OCI-LY7 (cell line): ENCODE measurements at regions of chr20 and their contacts with region 1.

Region 1: DNA sequence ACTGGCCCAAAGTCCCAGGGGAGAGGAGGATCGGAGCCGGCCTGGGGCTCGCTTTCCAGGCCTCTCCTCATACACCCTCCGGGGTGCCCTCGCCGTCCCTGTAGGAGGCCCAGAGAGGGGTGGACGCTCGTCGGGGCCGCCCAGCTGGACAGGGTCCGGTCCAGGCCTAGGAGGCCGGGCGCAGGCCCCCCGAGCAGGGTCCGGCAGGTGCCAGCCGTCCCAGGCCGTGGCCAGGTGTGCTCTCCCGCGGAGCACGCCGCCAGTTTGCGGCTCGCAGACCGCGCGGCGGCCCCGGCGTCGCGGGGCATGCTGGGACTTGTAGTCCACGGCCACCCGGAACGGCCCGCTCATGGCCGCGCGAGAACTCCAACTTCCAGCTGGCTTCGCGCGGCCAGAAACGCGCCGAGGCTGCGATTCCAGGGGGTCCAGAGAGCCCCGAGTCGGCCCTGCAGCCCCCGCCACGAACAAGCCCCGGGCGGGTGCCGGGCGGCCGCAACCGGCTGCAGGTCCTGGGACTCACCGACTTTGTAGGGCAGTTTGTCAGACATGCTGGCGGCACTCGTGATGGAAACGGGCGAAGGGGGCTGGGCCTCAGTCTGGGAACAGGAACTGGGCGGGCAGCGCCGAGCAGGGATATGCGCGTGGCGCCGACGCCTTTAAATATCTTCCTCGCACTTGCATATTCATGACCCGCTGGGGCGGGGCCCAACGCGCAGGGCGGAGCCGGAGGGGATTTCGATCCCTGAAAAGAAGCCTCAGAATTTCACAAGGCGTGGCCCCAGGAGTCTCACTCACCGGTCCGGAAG is at the start of gene AHCY:
- DNase-seq: peak; percentile 96
- H3K4me3 ChIP-seq: peak within 1 kb of the TSS; percentile 81
- H3K27ac ChIP-seq: peak within 1 kb of the TSS; percentile 58
- H3K4me1 ChIP-seq: peaks cover 41% of the 10 kb centered on the region
- CTCF ChIP-seq: no peak; the same call in 1 of the 2 replicates
- total RNA-seq, gene AHCY: 121 and 133 TPM in 2 replicates

Region 2: DNA sequence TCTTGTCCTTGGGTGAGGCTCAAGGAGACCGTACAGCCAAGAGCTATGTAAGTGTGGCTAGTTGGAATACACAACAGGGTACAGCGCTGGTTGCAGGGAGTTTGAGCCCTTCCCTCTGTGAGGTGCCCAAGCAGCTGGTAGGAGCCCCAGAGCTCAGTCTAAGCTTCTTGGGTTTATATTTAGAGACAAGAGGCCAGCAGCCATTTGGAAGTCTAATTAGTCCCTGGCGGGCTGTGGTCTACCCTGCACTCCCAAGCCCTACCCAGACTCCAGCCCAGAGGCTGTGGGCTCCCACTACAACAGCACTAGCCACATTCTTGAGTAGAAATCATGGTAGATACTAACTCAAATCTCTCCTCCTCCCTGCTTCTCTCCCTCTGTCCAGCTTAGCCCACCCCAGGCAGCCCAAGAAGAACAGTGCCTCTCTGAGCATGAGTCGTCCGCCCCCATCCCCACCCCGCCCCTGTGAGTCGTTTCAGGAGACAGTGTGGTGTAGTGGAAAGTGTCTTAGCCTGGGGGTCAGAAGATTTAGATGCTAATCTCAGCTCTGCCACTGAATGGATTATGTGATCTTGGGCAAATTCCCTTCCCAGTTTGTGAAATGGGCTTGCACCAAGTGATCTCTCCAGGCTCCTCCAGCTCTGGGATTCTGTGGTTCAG is 228.7 kb before region 1 on chr20:
- CTCF ChIA-PET with region 1: no interaction called
- POLR2A ChIA-PET with region 1: no interaction called
- intact Hi-C with region 1: no loop called
- DNase-seq: no peak
- H3K4me3 ChIP-seq: no peak overlapping the region
- H3K27ac ChIP-seq: no peak overlapping the region
- H3K4me1 ChIP-seq: peaks cover 11% of the 10 kb centered on the region
- CTCF ChIP-seq: no peak

Region 3: DNA sequence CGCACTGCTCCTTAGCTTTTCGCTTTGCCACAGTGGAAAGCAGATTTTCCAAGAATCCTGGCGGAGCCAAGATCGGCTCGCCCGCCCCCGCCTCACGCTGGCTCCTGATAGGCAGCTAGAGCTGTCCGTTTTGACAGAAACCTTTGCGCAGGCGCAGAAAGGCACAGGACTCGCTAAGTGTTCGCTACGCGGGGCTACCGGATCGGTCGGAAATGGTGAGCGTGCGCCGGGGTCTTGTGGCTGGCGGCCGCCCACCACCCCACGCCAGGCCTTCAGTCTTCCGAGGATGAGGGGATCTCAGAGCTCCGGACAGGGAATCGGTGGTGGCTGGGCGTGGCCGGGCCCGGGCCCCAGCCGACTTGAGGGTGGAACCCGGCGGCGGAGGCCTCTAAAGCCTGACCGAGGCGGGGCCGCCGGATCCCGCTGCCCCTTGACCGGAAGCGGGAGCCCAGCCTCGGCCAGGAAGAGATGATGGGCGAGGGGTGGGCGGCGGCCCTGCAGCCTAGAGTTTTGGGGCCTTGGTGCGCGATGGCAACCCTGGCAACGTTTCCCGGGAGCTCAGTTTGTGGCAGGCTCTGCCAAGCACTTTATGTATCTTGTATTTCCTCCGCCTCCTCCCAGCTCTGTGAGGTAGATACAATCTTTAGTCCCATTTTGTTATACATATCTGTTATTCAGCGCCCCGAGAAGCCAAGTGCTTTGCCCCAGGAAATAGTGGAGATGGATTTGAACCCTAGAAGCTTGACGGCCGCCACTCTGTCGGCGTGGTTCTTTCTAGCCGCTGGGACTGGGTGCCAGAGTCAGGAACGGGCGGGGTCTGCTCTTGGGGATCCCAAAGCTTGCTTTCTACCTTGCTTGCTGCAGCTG is 213.6 kb after region 1 on chr20 and contains the start of gene DYNLRB1:
- CTCF ChIA-PET with region 1: no interaction called
- POLR2A ChIA-PET with region 1: no interaction called
- intact Hi-C with region 1: loop called (anchors 2 kb)
- DNase-seq: peak; percentile 99
- H3K4me3 ChIP-seq: peak within 1 kb of the TSS; percentile 99
- H3K27ac ChIP-seq: peak within 1 kb of the TSS; percentile 29
- H3K4me1 ChIP-seq: peaks cover 19% of the 10 kb centered on the region
- CTCF ChIP-seq: no peak
- total RNA-seq, gene DYNLRB1: 128 and 155 TPM in 2 replicates

Region 4: DNA sequence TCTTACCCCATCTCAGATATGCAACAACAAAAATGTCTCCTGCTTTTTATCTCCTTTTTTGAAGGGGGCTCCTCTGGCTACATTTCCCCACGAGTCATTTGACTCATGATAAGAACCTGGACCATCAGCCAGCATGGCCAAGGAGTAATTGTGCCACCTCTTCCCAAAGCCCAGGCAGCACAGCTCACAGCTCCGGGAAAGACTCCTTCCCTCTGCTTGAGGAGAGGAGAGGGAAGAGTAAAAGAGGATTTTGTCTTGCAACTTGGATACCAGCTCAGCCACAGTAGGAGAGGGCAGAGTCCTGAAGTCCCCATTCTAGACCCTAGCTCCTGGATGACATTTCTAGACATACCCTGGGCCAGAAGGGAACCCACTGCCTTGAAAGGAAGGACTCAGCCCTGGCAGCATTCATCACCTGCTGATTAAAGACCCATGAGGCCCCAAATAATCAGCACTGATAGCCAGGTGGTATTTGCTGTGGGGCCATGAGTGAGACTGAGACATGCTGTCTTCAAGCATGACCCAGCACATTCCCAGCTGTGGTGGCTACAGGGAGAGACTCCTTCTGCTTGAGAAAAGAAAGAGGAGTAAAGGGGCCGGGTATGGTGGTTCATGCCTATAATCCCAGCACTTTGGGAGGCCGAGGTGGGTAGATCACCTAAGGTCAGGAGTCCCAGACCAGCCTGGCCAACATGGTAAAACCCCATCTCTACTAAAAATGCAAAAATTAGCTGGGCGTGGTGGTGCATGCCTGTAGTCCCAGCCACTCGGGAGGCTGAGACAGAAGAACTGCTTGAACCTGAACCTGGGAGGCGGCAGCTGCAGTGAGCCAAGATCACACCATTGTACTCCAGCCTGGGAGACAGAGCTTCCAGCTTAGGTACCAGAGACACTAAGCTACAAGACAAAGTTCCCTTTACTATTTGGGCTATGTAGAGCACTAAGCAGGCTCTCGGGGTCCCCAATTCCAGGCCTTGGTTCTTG is 494.4 kb after region 1 on chr20:
- CTCF ChIA-PET with region 1: no interaction called
- POLR2A ChIA-PET with region 1: no interaction called
- intact Hi-C with region 1: no loop called
- DNase-seq: no peak
- H3K4me3 ChIP-seq: no peak overlapping the region
- H3K27ac ChIP-seq: no peak overlapping the region
- H3K4me1 ChIP-seq: no peaks in the 10 kb centered on the region
- CTCF ChIP-seq: no peak